Naive thymus-derived CD4-positive, alpha-beta T cell (primary cell): ENCODE measurements at regions of chr1 and their contacts with region 1.

Region 1: DNA sequence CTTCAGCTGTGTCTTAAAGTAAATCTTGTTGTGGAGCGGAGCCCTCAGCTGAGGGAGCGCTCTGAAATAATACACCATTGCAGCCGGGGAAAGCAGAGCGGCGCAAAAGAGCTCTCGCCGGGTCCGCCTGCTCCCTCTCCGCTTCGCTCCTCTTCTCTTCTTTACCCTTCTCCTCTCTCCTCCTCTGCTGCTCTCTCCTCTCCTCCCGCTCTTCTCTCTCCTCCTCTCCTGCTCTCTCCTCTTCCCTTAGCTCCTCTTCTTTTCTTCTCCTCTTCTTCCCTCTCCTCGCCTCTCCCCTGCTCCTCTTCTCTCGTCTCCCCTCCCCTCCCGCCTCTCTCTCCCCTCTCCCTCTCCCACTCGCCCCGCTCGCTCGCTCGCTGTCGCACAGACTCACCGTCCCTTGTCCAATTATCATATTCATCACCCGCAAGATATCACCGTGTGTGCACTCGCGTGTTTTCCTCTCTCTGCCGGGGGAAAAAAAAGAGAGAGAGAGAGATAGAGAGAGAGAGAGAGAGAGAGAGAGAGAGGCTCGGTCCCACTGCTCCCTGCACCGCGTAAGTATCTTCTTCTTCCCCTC is at the start of gene PROX1:
- DNase-seq: peak in 7 of 9 donors; percentile 58 to 74 (median 70)
- ATAC-seq: peak; percentile 81
- H3K4me3 ChIP-seq: peak within 1 kb of the TSS; percentile 56
- H3K4me3 Mint-ChIP-seq: peak within 1 kb of the TSS; percentile 85 to 97 (median 91)
- H3K27ac ChIP-seq: no peak within 1 kb of the TSS
- H3K27ac Mint-ChIP-seq: peak within 1 kb of the TSS in 8 of 9 donors; percentile 32 to 91 (median 89)
- H3K4me1 ChIP-seq: peaks cover 0 to 45% of the 10 kb centered on the region in 2 donors
- H3K4me1 Mint-ChIP-seq: peaks cover 31 to 67% (median 60%) of the 10 kb centered on the region in 7 donors
- H3K27me3 ChIP-seq: peaks cover 0 to 37% of the 10 kb centered on the region in 2 donors
- H3K27me3 Mint-ChIP-seq: peaks cover 90 to 99% (median 95%) of the 10 kb centered on the region in 5 donors
- total RNA-seq, gene PROX1: not detected

Region 2: GRCh38 chr1:213761845-213762407 is 226.1 kb before region 1 on chr1:
- CTCF ChIA-PET with region 1: no interaction called
- POLR2A ChIA-PET with region 1: no interaction called
- intact Hi-C with region 1: loop called in 1 of 2 experiments (anchors 2 kb)
- DNase-seq: peak in 8 of 9 donors; percentile 24 to 76 (median 62)
- ATAC-seq: peak; percentile 96
- H3K4me3 ChIP-seq: no peak overlapping the region
- H3K4me3 Mint-ChIP-seq: peak overlapping the region in 9 of 10 donors; percentile 22 to 74 (median 56)
- H3K27ac ChIP-seq: no peak overlapping the region
- H3K27ac Mint-ChIP-seq: peak overlapping the region; percentile 26 to 93 (median 71)
- H3K4me1 ChIP-seq: peaks cover 0 to 12% of the 10 kb centered on the region in 2 donors
- H3K4me1 Mint-ChIP-seq: peaks cover 12 to 35% (median 21%) of the 10 kb centered on the region in 7 donors
- H3K27me3 ChIP-seq: no peaks in the 10 kb centered on the region
- H3K27me3 Mint-ChIP-seq: peaks cover 0 to 5% (median 0%) of the 10 kb centered on the region in 5 donors

Region 3: DNA sequence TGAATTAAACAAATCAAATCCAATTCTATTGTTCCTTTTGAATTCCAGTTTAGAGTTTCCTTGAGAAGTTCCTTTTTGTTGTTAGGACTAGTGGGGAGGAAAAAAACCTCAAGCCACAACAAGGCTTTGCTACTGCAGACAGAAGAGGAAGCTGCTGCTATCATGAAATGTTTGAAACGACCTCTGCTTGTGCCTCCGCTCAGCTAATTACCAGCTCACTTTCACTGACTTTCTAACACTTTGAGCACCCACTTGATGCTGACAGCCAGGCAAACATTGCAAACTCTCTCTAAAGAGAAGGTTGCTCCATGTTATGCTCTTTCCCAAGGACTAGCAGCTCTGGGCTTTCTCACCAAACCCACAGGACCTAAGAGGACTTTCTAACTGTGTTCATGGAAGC is 204.1 kb before region 1 on chr1:
- CTCF ChIA-PET with region 1: interaction called, 3 read pairs
- POLR2A ChIA-PET with region 1: no interaction called
- intact Hi-C with region 1: loop called in 1 of 2 experiments (anchors 5 kb)
- DNase-seq: peak in 7 of 9 donors; percentile 24 to 63 (median 52)
- ATAC-seq: peak; percentile 70
- H3K4me3 ChIP-seq: no peak overlapping the region
- H3K4me3 Mint-ChIP-seq: peak overlapping the region in 9 of 10 donors; percentile 39 to 81 (median 70)
- H3K27ac ChIP-seq: no peak overlapping the region
- H3K27ac Mint-ChIP-seq: peak overlapping the region in 6 of 9 donors; percentile 4 to 84 (median 48)
- H3K4me1 ChIP-seq: peaks cover 0 to 20% of the 10 kb centered on the region in 2 donors
- H3K4me1 Mint-ChIP-seq: peaks cover 0 to 42% (median 39%) of the 10 kb centered on the region in 7 donors
- H3K27me3 ChIP-seq: no peaks in the 10 kb centered on the region
- H3K27me3 Mint-ChIP-seq: peaks cover 6 to 17% (median 8%) of the 10 kb centered on the region in 5 donors

Region 4: GRCh38 chr1:213852107-213852506 is 135.9 kb before region 1 on chr1:
- CTCF ChIA-PET with region 1: no interaction called
- POLR2A ChIA-PET with region 1: interaction called, 5 read pairs
- intact Hi-C with region 1: loop called in 1 of 2 experiments (anchors 2 kb)
- DNase-seq: peak in 7 of 9 donors; percentile 64 to 91 (median 84)
- ATAC-seq: peak; percentile 93
- H3K4me3 ChIP-seq: peak overlapping the region; percentile 12
- H3K4me3 Mint-ChIP-seq: no peak overlapping the region
- H3K27ac ChIP-seq: peak overlapping the region; percentile 62
- H3K27ac Mint-ChIP-seq: no peak overlapping the region
- H3K4me1 ChIP-seq: peaks cover 0 to 54% of the 10 kb centered on the region in 2 donors
- H3K4me1 Mint-ChIP-seq: peaks cover 5 to 28% (median 13%) of the 10 kb centered on the region in 7 donors
- H3K27me3 ChIP-seq: no peaks in the 10 kb centered on the region
- H3K27me3 Mint-ChIP-seq: peaks cover 0 to 2% (median 0%) of the 10 kb centered on the region in 5 donors

Region 5: DNA sequence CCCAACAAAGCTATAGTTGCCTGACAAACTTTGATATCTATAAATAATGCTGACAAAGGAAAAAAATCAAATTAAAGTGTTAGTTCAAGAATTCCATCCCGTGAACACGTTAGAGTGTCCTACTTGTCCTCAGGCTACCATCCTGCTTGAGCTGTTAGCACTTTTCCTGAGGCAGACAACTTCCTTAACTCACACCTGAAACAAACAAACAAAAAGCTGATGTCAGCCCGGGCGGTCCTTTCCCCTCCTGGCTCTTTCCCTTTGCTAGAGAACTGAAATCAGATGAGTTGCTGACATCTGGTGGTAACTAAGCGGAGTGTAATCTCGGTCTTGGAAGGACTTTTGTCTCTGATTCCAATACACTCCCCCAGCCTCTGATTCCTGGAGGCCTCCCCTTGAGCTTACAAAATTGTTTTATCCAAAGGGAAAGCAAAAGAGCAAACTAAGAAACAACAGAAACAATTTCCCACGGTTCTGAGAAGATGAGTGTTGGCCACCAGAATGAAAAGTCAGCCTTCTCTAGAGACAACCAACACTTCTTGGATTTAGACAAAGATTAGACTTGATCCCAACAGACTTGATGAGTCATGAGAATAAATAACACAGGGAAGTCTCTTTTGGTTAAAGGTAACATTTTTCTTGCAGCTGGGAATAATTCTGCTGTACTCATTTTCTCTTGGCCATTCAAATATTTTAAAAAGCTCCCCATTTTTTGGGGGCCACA is 135.2 kb after region 1 on chr1:
- CTCF ChIA-PET with region 1: no interaction called
- POLR2A ChIA-PET with region 1: no interaction called
- intact Hi-C with region 1: loop called in 1 of 2 experiments (anchors 10 kb)
- DNase-seq: peak in 7 of 9 donors; percentile 39 to 62 (median 53)
- ATAC-seq: peak; percentile 61
- H3K4me3 ChIP-seq: no peak overlapping the region
- H3K4me3 Mint-ChIP-seq: peak overlapping the region in 4 of 10 donors; percentile 24 to 71 (median 48)
- H3K27ac ChIP-seq: no peak overlapping the region
- H3K27ac Mint-ChIP-seq: peak overlapping the region in 3 of 9 donors; percentile 6 to 59 (median 28)
- H3K4me1 ChIP-seq: peaks cover 0 to 3% of the 10 kb centered on the region in 2 donors
- H3K4me1 Mint-ChIP-seq: peaks cover 4 to 29% (median 11%) of the 10 kb centered on the region in 7 donors
- H3K27me3 ChIP-seq: no peaks in the 10 kb centered on the region
- H3K27me3 Mint-ChIP-seq: peaks cover 0 to 19% (median 0%) of the 10 kb centered on the region in 5 donors

Region 6: DNA sequence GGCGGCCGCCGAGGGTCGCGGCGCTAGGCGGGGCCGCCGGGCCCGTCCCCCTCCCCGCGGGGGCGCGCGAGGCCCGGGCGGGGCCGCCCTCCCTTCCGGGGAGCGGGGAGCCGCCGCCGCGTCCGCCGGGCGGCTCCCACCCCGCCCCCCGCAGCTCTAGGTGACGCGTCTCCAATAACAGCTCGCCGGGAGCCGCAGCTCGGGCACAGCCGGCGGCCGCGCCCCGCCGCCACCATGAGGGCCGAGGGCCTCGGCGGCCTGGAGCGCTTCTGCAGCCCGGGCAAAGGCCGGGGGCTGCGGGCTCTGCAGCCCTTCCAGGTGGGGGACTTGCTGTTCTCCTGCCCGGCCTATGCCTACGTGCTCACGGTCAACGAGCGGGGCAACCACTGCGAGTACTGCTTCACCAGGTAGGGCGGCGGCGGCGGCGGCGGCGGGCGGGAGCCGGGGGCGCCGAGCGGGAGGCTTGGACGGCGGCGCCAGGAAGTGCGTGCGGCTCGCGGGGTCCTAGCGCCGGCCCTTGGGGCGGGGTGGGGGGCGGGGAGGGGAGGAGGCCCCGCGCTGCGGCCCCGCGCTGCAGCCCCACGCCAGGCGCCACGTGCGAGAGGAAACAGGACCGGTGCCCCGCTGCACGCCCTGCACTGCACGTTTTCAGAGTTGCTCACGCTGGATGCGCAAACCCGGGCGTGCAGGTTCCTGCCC is 293.2 kb after region 1 on chr1 and contains the start of gene SMYD2:
- CTCF ChIA-PET with region 1: no interaction called
- POLR2A ChIA-PET with region 1: no interaction called
- intact Hi-C with region 1: loop called in 1 of 2 experiments (anchors 10 kb)
- DNase-seq: peak; percentile 49 to 77 (median 72)
- ATAC-seq: peak; percentile 86
- H3K4me3 ChIP-seq: peak within 1 kb of the TSS; percentile 88
- H3K4me3 Mint-ChIP-seq: peak within 1 kb of the TSS; percentile 79 to 98 (median 90)
- H3K27ac ChIP-seq: peak within 1 kb of the TSS; percentile 82
- H3K27ac Mint-ChIP-seq: peak within 1 kb of the TSS; percentile 81 to 95 (median 91)
- H3K4me1 ChIP-seq: peaks cover 17 to 34% of the 10 kb centered on the region in 2 donors
- H3K4me1 Mint-ChIP-seq: peaks cover 30 to 64% (median 45%) of the 10 kb centered on the region in 7 donors
- H3K27me3 ChIP-seq: no peaks in the 10 kb centered on the region
- H3K27me3 Mint-ChIP-seq: no peaks in the 10 kb centered on the region
- total RNA-seq, gene SMYD2: 24.3 to 39.5 (median 34.4) TPM

Region 7: GRCh38 chr1:214427871-214428277 is 439.9 kb after region 1 on chr1:
- CTCF ChIA-PET with region 1: no interaction called
- POLR2A ChIA-PET with region 1: no interaction called
- intact Hi-C with region 1: loop called in 1 of 2 experiments (anchors 5 kb)
- DNase-seq: peak in 8 of 9 donors; percentile 54 to 82 (median 71)
- ATAC-seq: peak; percentile 95
- H3K4me3 ChIP-seq: no peak overlapping the region
- H3K4me3 Mint-ChIP-seq: peak overlapping the region; percentile 50 to 81 (median 64)
- H3K27ac ChIP-seq: no peak overlapping the region
- H3K27ac Mint-ChIP-seq: peak overlapping the region; percentile 64 to 98 (median 85)
- H3K4me1 ChIP-seq: peaks cover 11 to 18% of the 10 kb centered on the region in 2 donors
- H3K4me1 Mint-ChIP-seq: peaks cover 18 to 48% (median 34%) of the 10 kb centered on the region in 7 donors
- H3K27me3 ChIP-seq: no peaks in the 10 kb centered on the region
- H3K27me3 Mint-ChIP-seq: peaks cover 0 to 3% (median 0%) of the 10 kb centered on the region in 5 donors